ENCODE measurements at regions of chr7 and their contacts with region 1.

Region 1: DNA sequence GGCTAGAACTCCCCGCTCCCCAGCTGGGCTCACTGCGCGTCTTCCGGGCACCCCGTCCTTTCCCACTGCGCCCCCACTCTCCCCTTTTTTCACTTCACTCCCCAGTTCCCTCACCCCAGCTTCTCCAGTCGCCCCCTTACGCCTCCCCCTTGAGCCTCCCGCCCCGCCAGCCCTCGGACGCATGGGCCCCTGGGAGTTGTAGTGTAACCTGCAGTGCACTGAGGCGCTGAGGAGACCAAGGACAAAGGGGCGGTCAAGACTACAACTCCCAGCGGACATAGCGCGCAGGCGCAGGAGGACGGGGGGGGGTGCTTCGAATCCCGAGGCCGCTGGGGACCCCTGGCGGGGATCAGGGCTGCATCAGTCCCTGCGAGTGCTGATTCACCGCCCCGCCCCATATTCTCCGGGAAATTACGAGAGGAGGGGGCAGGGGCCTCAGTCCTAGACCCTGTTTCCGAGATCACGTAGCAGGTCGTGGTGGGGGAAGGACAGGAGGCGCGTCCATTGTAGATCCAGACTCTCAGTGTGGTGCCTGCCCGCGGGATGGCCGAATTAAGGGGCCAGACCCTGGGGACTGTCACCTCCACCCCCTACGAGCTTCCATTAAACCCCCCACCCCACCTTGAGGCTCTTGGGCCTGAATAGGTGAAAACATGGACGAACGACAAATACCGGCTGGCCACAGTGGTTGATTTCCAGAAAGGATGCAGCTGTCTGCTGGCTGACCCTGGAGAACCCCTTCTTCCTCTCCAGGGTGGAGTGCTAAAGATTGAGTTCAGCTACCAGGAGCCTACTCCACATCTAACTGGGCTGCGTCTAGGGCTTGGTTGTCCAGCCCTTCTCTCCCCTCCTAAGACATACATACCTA is 554 bp upstream of the YWHAG start:
- DNase-seq: peak; percentile 99
- H3K4me3 Mint-ChIP-seq: peak overlapping the region; percentile 88
- H3K27ac Mint-ChIP-seq: peak overlapping the region; percentile 95
- H3K4me1 Mint-ChIP-seq: peaks cover 44% of the 10 kb centered on the region
- H3K27me3 Mint-ChIP-seq: no peaks in the 10 kb centered on the region

Region 2: GRCh38 chr7:76047811-76048667 is 311.3 kb before region 1 on chr7 and contains the starts of genes MDH2 and STYXL1:
- CTCF ChIA-PET with region 1: no interaction called
- POLR2A ChIA-PET with region 1: no interaction called
- intact Hi-C with region 1: loop called (anchors 1 kb)
- DNase-seq: peak; percentile 96
- H3K4me3 Mint-ChIP-seq: peak within 1 kb of the TSS; percentile 92
- H3K27ac Mint-ChIP-seq: peak within 1 kb of the TSS; percentile 90
- H3K4me1 Mint-ChIP-seq: peaks cover 42% of the 10 kb centered on the region
- H3K27me3 Mint-ChIP-seq: no peaks in the 10 kb centered on the region
- total RNA-seq, gene MDH2: 259 to 271 TPM
- total RNA-seq, gene STYXL1: 37.8 to 40.5 TPM

Region 3: DNA sequence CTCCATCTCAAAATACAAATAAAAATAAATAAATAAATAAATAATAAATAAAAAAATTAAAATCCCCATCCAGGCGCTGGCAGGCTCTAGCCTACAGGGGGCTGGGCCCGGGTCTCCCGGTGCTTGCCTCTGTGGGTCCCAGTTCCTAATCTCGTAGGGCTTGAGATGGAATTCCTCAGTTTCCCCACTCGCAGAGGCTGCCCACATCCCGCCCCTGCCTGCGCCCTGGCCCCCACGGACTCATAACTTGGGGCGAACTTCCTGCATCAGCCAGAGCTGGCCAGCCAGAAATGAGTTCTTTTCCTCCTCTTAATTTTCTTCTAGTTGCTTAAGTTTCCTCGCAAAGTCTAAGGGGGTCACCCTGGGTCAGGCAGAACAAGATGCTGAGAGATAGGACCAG is 179.7 kb before region 1 on chr7:
- CTCF ChIA-PET with region 1: interaction called, 10 read pairs
- POLR2A ChIA-PET with region 1: no interaction called
- intact Hi-C with region 1: no loop called
- DNase-seq: no peak
- H3K4me3 Mint-ChIP-seq: no peak overlapping the region
- H3K27ac Mint-ChIP-seq: no peak overlapping the region
- H3K4me1 Mint-ChIP-seq: no peaks in the 10 kb centered on the region
- H3K27me3 Mint-ChIP-seq: peaks cover 1% of the 10 kb centered on the region

Region 4: GRCh38 chr7:76291343-76292212 is 67.8 kb before region 1 on chr7:
- CTCF ChIA-PET with region 1: interaction called, 4 read pairs
- POLR2A ChIA-PET with region 1: no interaction called
- intact Hi-C with region 1: loop called (anchors 1 kb)
- DNase-seq: peak; percentile 96
- H3K4me3 Mint-ChIP-seq: peak overlapping the region; percentile 0
- H3K27ac Mint-ChIP-seq: peak overlapping the region; percentile 61
- H3K4me1 Mint-ChIP-seq: peaks cover 10% of the 10 kb centered on the region
- H3K27me3 Mint-ChIP-seq: no peaks in the 10 kb centered on the region

Region 5: GRCh38 chr7:76343294-76343930 is 15.9 kb before region 1 on chr7:
- CTCF ChIA-PET with region 1: interaction called, 3 read pairs
- POLR2A ChIA-PET with region 1: interaction called, 14 read pairs
- intact Hi-C with region 1: loop called (anchors 1 kb)
- DNase-seq: peak; percentile 48
- H3K4me3 Mint-ChIP-seq: no peak overlapping the region
- H3K27ac Mint-ChIP-seq: peak overlapping the region; percentile 53
- H3K4me1 Mint-ChIP-seq: peaks cover 76% of the 10 kb centered on the region
- H3K27me3 Mint-ChIP-seq: no peaks in the 10 kb centered on the region

Region 6: GRCh38 chr7:76393116-76394031 is 34.0 kb after region 1 on chr7:
- CTCF ChIA-PET with region 1: interaction called, 4 read pairs
- POLR2A ChIA-PET with region 1: interaction called, 3 read pairs
- intact Hi-C with region 1: loop called (anchors 1 kb)
- DNase-seq: peak; percentile 94
- H3K4me3 Mint-ChIP-seq: peak overlapping the region; percentile 81
- H3K27ac Mint-ChIP-seq: peak overlapping the region; percentile 94
- H3K4me1 Mint-ChIP-seq: peaks cover 26% of the 10 kb centered on the region
- H3K27me3 Mint-ChIP-seq: no peaks in the 10 kb centered on the region

Region 7: DNA sequence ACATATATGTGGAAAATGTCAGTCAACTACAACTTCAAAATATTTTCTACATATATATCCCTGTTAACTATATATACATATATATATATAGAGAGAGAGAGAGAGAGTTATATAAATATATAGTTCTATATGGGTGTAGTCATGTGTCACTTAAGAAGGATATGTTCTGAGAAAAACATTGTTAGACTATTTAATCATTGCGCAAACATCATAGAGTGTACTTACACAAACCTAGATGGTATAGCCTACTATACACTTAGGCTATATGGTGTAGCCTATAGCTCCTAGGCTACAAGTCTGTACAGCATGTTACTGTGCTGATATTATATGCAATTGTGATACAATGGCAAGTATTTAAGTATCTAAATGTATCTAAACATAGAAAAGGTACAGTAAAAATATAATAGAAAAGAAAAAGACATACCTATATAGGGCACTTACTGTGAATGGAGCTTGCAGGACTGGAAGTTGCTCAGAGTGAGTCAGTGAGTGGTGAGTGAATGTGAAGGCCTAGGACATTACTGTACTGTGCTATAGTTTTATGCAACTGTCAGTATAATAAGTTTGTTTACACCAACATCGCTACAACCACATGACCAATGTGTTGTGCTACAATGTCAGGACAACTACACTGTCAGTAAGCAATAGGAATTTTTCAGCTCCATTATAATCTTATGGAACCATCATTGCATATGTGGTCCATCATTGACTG is 858.3 kb after region 1 on chr7:
- CTCF ChIA-PET with region 1: no interaction called
- POLR2A ChIA-PET with region 1: no interaction called
- intact Hi-C with region 1: no loop called
- DNase-seq: no peak
- H3K4me3 Mint-ChIP-seq: no peak overlapping the region
- H3K27ac Mint-ChIP-seq: no peak overlapping the region
- H3K4me1 Mint-ChIP-seq: no peaks in the 10 kb centered on the region
- H3K27me3 Mint-ChIP-seq: no peaks in the 10 kb centered on the region

Measured in activated CD4-positive, alpha-beta memory T cell treated with anti-CD3 and anti-CD28 coated beads for 36 hours (primary cell).